ENCODE measurements at regions of chrX and their contacts with region 1.

Region 1: GRCh38 chrX:68807818-68808217 is 21.0 kb upstream of the EFNB1 start:
- DNase-seq: no peak
- ATAC-seq: peak in 3 of 4 donors; percentile 63 to 64 (median 64)
- H3K4me3 ChIP-seq: no peak overlapping the region
- H3K27ac ChIP-seq: no peak overlapping the region
- H3K4me1 ChIP-seq: no peaks in the 10 kb centered on the region
- H3K27me3 ChIP-seq: peaks cover 0 to 18% (median 0%) of the 10 kb centered on the region in 9 donors
- CTCF ChIP-seq: peak; percentile 14 to 61 (median 44)
- POLR2A ChIP-seq: no peak

Region 2: GRCh38 chrX:68196939-68197791 is 610.7 kb before region 1 on chrX:
- intact Hi-C with region 1: loop called in 3 of 10 experiments (anchors 5 to 10 kb)
- DNase-seq: peak in 1 of 5 donors; percentile 7
- ATAC-seq: peak in 3 of 4 donors; percentile 39 to 64 (median 63)
- H3K4me3 ChIP-seq: no peak overlapping the region
- H3K27ac ChIP-seq: no peak overlapping the region
- H3K4me1 ChIP-seq: no peaks in the 10 kb centered on the region
- H3K27me3 ChIP-seq: peaks cover 0 to 7% (median 0%) of the 10 kb centered on the region in 9 donors
- CTCF ChIP-seq: peak; percentile 50 to 70 (median 64)
- POLR2A ChIP-seq: no peak

Region 3: DNA sequence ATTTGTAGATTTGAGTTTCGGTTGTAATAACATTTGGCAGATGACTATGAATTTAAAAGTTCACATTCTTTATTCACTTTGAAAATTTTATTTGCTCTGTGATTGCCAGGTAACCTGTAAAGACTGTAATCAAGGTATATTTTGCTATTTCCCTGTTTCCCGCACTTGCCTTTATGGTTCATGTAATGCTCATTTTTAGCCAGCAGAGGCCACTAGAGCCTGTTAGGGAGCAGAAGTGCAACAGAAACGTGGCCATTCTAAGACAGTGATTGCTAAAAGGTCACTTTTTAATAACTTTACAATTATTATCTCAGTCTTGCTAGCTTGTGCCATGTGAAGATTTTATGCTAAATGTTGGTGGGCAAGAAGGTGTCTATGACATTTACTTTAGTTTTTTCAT is 296.6 kb before region 1 on chrX:
- intact Hi-C with region 1: loop called in 9 of 10 experiments (anchors 2 to 10 kb)
- DNase-seq: peak in 2 of 5 donors; percentile 13 to 17
- ATAC-seq: peak in 2 of 4 donors; percentile 51 to 56
- H3K4me3 ChIP-seq: no peak overlapping the region
- H3K27ac ChIP-seq: no peak overlapping the region
- H3K4me1 ChIP-seq: peaks cover 0 to 21% (median 0%) of the 10 kb centered on the region in 12 donors
- H3K27me3 ChIP-seq: peaks cover 0 to 4% (median 0%) of the 10 kb centered on the region in 9 donors
- CTCF ChIP-seq: peak; percentile 63 to 93 (median 69)
- POLR2A ChIP-seq: no peak

Region 4: DNA sequence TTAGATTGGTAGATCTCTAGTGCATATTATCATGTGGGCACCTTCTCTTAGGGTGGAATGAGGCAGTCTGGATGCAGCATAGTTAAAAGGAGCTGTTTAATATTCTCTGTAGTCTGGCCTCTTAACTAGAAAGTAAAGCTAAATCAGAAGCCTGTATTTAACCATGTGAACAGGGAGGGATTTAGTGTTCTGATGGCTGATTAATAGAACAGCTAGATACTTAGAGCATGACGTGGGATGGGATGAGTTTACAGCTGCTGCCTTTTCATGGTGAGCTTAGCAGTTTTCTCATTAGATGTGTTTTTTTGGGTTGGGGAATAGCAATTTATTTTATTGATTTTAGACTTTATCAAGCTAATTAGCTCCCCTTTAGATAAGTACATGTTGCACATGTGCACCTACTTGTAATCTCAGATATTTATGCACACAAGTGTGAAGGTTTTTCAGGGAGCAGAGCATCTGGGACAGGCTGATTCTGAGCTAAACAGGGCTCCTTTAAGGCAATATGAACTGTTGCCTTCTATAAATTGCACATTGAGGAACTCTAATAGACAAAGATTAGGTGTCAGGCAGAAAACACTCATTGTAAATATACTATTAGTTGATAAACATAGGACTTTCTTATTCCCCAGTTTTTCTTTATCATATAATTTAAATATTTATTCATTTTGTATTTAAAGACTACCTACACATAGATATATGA is 274.8 kb before region 1 on chrX:
- intact Hi-C with region 1: loop called in 1 of 10 experiments (anchors 10 kb)
- DNase-seq: no peak
- ATAC-seq: no peak
- H3K4me3 ChIP-seq: no peak overlapping the region
- H3K27ac ChIP-seq: no peak overlapping the region
- H3K4me1 ChIP-seq: no peaks in the 10 kb centered on the region
- H3K27me3 ChIP-seq: peaks cover 0 to 10% (median 0%) of the 10 kb centered on the region in 9 donors
- CTCF ChIP-seq: no peak
- POLR2A ChIP-seq: no peak

Region 5: GRCh38 chrX:68732906-68733493 is 74.8 kb before region 1 on chrX:
- intact Hi-C with region 1: loop called (anchors 1 to 2 kb)
- DNase-seq: peak; percentile 47 to 70 (median 52)
- ATAC-seq: peak; percentile 42 to 86 (median 76)
- H3K4me3 ChIP-seq: no peak overlapping the region
- H3K27ac ChIP-seq: no peak overlapping the region
- H3K4me1 ChIP-seq: no peaks in the 10 kb centered on the region
- H3K27me3 ChIP-seq: peaks cover 0 to 35% (median 0%) of the 10 kb centered on the region in 9 donors
- CTCF ChIP-seq: peak; percentile 54 to 73 (median 68)
- POLR2A ChIP-seq: no peak

Measured in heart left ventricle (tissue), 16 donors.